ENCODE measurements at regions of chr5 and their contacts with region 1.

Region 1: GRCh38 chr5:32174011-32174870 is at the start of gene GOLPH3:
- DNase-seq: peak; percentile 98
- ATAC-seq: peak; percentile 86
- H3K4me3 Mint-ChIP-seq: peak within 1 kb of the TSS; percentile 87
- H3K27ac Mint-ChIP-seq: peak within 1 kb of the TSS; percentile 97
- H3K4me1 Mint-ChIP-seq: peaks cover 30% of the 10 kb centered on the region
- H3K27me3 Mint-ChIP-seq: no peaks in the 10 kb centered on the region
- total RNA-seq, gene GOLPH3: 54.2 to 58.3 TPM

Region 2: DNA sequence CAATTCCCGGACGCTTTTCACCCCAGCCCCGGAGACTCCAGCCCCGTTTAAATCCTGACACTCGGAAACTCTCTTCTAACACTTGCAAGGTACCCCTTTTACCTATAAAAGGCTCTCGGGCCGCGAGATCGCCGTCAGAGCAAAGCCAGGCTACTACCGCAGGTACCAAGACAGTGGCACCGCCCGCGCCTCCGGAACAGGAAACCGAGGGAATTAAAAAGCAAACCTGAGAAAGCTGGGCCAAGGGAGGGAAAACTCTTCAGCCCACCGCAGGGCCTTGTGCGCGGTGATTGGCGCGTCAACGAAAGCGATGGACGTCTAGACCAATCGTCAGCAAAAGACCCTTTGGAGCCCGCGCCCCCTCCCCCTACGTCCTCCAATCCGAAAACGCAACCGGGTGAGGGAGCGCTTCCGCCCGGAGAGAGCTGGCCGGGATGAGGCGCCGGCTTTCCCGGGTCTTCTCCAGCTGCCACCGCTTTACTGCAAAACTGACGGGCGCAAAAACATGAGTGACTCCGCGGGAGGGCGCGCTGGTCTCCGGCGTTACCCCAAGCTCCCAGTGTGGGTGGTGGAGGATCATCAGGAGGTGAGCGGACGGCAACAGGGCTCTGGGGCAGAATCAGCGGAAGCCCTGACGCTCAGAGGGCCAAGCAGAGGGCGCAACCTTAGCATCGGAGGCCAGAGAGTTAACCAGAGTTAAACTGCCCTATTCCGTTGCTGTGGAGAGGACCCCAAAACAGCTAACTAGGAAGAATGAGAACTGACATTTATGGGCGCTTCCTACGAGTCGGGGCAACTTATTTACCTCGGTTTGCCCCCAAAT is 642.1 kb before region 1 on chr5 and contains the starts of genes C5orf22 and DROSHA:
- CTCF ChIA-PET with region 1: no interaction called
- POLR2A ChIA-PET with region 1: no interaction called
- intact Hi-C with region 1: loop called (anchors 1 to 2 kb)
- DNase-seq: peak; percentile 96
- ATAC-seq: peak; percentile 97
- H3K4me3 Mint-ChIP-seq: peak within 1 kb of the TSS; percentile 82
- H3K27ac Mint-ChIP-seq: peak within 1 kb of the TSS; percentile 80
- H3K4me1 Mint-ChIP-seq: peaks cover 39% of the 10 kb centered on the region
- H3K27me3 Mint-ChIP-seq: no peaks in the 10 kb centered on the region
- total RNA-seq, gene C5orf22: 25.2 to 30.6 TPM
- total RNA-seq, gene DROSHA: 84.3 to 94.4 TPM

Region 3: GRCh38 chr5:32059768-32060530 is 114.3 kb before region 1 on chr5:
- CTCF ChIA-PET with region 1: no interaction called
- POLR2A ChIA-PET with region 1: no interaction called
- intact Hi-C with region 1: no loop called
- DNase-seq: no peak
- ATAC-seq: no peak
- H3K4me3 Mint-ChIP-seq: no peak overlapping the region
- H3K27ac Mint-ChIP-seq: no peak overlapping the region
- H3K4me1 Mint-ChIP-seq: no peaks in the 10 kb centered on the region
- H3K27me3 Mint-ChIP-seq: no peaks in the 10 kb centered on the region

Region 4: DNA sequence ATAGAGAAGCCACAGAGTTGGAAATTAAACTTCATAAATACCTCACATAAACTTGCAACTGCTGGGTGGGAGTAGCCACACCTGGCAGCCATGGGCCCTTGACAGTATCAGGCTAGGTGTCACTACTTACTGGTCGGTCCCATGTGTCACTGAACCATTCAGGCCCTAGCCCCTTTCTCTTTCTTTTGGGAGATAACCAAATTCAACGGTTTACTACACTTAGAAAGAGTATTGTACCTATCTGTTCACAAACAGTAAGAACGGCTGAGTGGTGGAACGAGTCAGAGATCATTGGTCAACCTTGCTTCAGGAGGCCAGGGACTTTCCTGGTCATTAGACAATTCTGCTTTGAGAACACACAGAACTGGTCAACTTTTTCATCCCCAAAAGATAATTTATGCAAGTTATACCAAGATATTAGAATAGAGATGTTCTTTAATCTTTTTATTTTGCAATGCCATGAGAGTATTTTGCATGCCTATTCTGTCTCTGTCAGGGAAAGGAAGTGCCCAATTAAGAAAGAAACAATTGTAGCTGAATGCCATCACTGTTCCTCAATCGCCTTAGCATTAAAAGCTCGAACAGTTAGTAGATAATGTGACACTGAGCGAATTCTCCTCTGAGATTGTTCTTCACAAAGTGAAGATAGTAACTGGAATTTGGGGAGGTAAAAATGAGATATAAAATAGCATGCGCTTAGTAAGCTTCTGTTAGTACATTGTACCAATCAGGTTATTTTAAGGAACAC is 51.0 kb before region 1 on chr5:
- CTCF ChIA-PET with region 1: no interaction called
- POLR2A ChIA-PET with region 1: no interaction called
- intact Hi-C with region 1: no loop called
- DNase-seq: no peak
- ATAC-seq: no peak
- H3K4me3 Mint-ChIP-seq: no peak overlapping the region
- H3K27ac Mint-ChIP-seq: no peak overlapping the region
- H3K4me1 Mint-ChIP-seq: peaks cover 34% of the 10 kb centered on the region
- H3K27me3 Mint-ChIP-seq: no peaks in the 10 kb centered on the region

Region 5: DNA sequence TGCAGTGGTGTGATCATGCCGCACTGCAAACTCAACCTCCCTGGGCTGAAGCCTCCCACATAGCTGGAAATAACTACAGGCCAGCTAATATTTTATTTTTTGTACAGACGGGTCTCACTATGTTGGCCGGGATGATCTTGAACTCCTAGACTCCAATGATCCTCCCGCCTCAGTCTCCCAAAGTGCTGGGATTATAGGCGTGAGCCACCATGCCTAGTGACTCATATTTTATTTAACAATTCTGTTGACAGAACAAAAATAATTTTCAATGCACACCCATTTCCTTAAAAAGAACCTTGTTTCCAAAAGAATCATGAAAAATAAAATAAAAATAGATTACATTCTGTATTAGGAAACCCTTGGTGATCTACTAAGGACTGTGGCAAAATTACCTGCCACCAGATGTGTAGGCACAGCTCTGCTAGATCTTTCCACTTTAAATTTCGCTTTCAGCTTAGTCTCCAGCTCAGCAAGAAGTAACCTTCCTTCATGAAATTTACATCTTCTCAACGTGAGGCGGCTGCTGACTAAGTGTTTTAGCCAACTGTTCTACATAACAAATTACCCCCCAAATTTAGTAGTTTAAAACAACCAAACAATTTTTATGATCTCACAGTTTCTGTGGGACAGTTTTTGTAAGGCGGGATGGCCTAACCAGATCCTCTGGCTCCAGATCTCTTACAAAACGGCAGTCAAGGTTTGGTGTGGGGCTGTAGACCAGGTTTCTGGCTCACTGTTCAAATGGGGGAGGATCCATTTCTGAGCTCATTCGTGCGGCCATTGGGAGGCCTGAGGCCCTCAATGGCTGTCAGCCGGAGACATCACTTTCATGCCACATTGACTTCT is 32.5 kb after region 1 on chr5:
- CTCF ChIA-PET with region 1: no interaction called
- POLR2A ChIA-PET with region 1: interaction called, 5 read pairs
- intact Hi-C with region 1: loop called (anchors 1 to 2 kb)
- DNase-seq: no peak
- ATAC-seq: no peak
- H3K4me3 Mint-ChIP-seq: no peak overlapping the region
- H3K27ac Mint-ChIP-seq: peak overlapping the region; percentile 82
- H3K4me1 Mint-ChIP-seq: peaks cover 39% of the 10 kb centered on the region
- H3K27me3 Mint-ChIP-seq: peaks cover under 1% of the 10 kb centered on the region

Region 6: DNA sequence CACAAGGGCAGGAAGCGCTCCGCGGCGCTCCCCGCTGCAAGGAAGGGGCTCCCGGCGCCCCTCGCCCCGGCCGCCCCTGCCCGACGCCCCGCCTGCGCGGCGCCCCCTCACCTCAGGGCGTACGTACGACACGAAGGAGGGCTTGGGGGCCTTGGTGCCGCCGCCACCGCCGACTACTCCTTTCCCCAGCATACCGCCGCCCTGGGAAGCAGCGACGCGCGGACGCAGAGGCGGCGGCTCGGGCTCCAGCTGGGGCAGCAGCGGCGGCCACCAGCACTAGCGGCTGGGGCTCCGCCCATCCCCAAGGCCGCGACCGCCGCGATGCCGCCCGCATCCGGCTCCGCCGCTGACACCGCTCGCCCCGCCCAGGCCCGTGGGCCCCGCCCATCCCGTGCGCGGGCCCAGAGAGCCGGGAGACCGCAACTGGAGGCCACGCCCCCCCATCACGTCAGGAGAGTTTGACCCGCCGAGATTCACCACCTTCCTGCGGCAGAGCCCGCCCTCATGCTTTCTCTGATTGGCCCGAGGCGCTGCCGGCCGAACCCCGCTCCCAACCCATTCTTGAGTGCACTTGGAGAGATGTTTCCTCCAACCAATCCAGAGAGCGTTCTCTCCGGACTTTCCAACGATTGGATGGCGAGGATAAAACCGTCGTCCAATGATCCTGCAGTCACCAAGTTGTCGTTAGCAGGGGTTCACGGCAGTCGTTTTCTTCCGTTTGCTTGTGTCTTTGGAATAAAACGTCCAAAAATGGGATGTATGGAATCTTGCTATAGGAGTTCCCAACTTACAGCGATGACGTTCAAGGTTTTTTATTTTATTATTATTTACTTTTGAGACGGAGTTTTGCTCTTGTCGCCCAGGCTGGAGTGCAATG is 138.6 kb after region 1 on chr5 and contains the start of gene MTMR12:
- CTCF ChIA-PET with region 1: no interaction called
- POLR2A ChIA-PET with region 1: no interaction called
- intact Hi-C with region 1: loop called (anchors 1 to 2 kb)
- DNase-seq: peak; percentile 100
- ATAC-seq: peak; percentile 97
- H3K4me3 Mint-ChIP-seq: peak within 1 kb of the TSS; percentile 87
- H3K27ac Mint-ChIP-seq: peak within 1 kb of the TSS; percentile 86
- H3K4me1 Mint-ChIP-seq: peaks cover 30% of the 10 kb centered on the region
- H3K27me3 Mint-ChIP-seq: no peaks in the 10 kb centered on the region
- total RNA-seq, gene MTMR12: 21.6 to 22.8 TPM

Region 7: DNA sequence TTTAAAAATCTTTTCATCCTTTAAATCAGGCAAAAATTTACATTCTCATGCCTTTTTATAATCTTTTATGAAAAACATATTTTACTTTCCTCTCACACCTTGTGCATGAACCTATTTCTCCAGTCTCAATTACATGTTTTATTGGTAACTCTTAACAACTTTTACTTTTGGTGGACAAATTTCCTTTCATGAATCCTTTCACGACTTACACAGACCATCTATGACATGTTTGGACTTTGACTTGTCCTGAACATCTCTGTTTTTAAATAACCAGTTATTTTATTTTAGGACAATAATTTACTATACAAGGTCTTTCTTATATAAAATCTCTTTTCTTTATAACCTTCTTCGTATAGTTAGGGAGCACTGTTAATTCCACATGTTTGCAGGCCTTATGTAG is 165.0 kb after region 1 on chr5:
- CTCF ChIA-PET with region 1: no interaction called
- POLR2A ChIA-PET with region 1: no interaction called
- intact Hi-C with region 1: no loop called
- DNase-seq: no peak
- ATAC-seq: no peak
- H3K4me3 Mint-ChIP-seq: no peak overlapping the region
- H3K27ac Mint-ChIP-seq: no peak overlapping the region
- H3K4me1 Mint-ChIP-seq: no peaks in the 10 kb centered on the region
- H3K27me3 Mint-ChIP-seq: no peaks in the 10 kb centered on the region

Region 8: DNA sequence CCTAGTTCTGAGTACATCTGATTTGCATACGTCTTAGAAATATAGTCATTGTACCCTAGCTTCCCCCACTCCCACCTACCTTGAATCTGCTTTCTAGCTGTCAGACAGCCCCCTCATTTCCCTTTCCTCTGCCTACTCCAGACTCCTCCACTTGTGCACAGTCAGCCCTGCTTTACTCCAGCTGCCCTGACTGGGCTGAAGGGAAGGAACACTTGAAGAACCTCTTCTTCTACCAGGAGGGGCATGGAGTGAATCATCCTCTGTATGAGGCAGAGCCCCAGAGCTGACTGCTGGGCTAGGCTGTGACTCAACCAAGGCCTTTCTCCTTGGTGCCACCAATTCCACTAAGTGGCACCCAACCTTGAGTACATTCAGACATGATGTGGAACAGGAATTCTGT is 288.4 kb after region 1 on chr5:
- CTCF ChIA-PET with region 1: no interaction called
- POLR2A ChIA-PET with region 1: no interaction called
- intact Hi-C with region 1: no loop called
- DNase-seq: peak; percentile 73
- ATAC-seq: peak; percentile 100
- H3K4me3 Mint-ChIP-seq: no peak overlapping the region
- H3K27ac Mint-ChIP-seq: peak overlapping the region; percentile 90
- H3K4me1 Mint-ChIP-seq: peaks cover 17% of the 10 kb centered on the region
- H3K27me3 Mint-ChIP-seq: no peaks in the 10 kb centered on the region

Region 9: DNA sequence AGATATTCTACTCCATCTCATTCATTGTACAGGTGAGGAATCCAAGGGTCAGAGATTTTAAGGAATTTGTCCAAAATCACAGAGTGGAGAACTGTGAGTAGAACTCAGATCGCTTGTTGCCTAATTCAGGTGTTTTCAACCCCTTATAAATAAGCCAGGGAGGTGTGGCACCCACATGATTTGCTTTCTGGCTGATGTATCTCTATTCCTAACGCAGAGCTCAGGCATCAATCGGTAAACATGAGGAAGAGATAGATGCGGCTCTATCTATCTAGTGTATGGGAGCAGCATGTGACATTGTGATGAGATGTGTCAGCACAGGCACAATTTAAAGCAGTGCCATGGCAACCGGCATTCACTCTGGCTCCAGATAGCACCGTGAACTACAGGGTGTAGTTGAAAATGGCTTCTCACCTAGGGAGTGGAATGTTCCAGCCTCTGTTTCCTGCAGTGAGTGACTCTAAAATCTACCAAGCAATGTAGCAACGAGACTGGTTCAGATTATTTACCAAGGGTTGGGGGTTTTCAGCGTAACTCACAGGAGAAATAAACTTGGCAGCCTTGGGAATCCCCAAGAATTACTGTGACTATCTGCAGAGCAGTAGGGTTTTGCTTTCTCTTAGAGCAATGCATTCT is 357.8 kb after region 1 on chr5:
- CTCF ChIA-PET with region 1: no interaction called
- POLR2A ChIA-PET with region 1: interaction called, 3 read pairs
- intact Hi-C with region 1: loop called in 1 of 2 experiments (anchors 2 kb)
- DNase-seq: peak; percentile 77
- ATAC-seq: peak; percentile 84
- H3K4me3 Mint-ChIP-seq: peak overlapping the region; percentile 82
- H3K27ac Mint-ChIP-seq: peak overlapping the region; percentile 94
- H3K4me1 Mint-ChIP-seq: peaks cover 54% of the 10 kb centered on the region
- H3K27me3 Mint-ChIP-seq: no peaks in the 10 kb centered on the region

Measured in activated CD4-positive, alpha-beta T cell treated with anti-CD3 and anti-CD28 coated beads for 36 hours (primary cell).